H1 (cell line): ENCODE measurements at regions of chr19 and their contacts with region 1.

Region 1: DNA sequence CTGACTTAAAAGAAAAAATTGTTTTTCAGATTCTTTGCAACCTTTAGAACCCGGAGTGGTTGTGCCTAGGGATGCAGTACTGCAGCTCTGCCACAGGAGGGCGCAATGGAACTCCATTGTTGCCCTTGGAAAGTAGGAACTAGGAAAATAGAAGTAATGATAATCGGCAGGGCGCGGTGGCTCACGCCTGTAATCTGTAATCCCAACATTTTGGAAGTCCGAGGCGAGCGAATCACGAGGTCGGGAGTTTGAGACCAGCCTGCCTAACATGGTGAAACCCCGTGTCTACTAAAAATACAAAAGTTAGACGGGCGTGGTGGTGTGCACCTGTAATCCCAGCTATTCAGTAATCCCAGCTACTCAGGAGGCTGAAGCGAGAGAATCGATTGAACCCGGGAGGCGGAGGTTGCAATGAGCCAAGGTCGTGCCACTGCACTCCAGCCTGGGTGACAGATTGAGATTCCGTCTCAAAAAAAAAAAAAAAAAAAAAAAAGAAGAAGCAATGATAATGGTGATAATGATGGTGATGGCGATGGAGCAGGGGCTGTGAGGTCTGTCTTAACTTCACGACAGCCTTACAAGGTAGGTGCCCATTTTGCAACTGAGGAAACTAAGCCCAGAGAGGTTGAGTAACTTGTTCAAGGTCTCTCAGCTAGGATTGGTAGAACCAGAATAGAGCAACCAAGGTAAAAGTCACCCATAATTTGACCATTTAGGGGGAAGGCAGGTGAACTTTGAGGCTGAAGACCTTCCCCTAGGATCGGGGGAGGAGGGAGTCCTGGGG is 5.5 kb upstream of the ADAMTS10 start:
- DNase-seq: peak in 1 of 2 experiments; percentile 87
- H3K4me3 ChIP-seq: no peak overlapping the region
- H3K27ac ChIP-seq: no peak overlapping the region
- H3K4me1 ChIP-seq: peaks cover 2 to 8% (median 5%) of the 10 kb centered on the region in 4 experiments; a peak in 5 of 7 replicates
- H3K27me3 ChIP-seq: no peaks in the 10 kb centered on the region
- CTCF ChIP-seq: peak; percentile 86 to 93 (median 90)
- EP300 ChIP-seq: no peak
- POLR2A ChIP-seq: no peak
- RAD21 ChIP-seq: peak; percentile 69 to 79

Region 2: DNA sequence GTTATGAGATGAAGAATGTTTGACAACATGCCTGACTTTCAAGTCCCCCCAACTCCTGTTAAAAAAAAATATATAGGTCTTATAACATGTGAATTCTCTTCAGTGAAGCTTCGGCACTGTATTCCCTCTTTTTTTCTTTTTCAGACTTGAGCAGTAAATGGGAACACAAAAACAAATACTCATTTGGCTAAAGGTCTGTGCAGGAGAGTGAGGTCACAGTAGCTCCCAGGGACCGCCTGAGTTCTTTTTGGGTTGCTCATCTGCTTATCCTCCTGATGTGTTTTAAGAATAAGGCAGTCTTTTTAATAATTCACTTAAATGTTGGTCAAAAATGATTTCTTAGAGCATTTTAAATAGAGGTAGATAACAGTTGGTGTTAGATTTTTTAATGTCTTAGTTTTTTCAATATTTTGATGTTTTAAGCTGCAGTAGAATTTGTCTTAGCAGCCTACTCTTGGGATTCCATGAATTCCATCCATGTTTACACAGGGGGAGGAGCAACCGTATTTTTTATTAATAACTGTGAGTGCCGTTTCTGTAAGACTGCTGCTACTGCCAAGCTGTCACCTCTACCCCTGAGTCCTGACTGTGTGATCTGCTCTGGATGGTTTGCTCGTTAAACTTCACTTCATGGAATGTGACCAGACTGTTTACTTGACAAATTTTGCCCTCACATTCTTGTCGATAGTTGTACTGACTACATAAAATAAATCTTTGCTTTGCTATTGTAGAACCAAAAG is 156.3 kb before region 1 on chr19:
- CTCF ChIA-PET with region 1: no interaction called
- POLR2A ChIA-PET with region 1: no interaction called
- DNase-seq: no peak
- H3K4me3 ChIP-seq: no peak overlapping the region
- H3K27ac ChIP-seq: no peak overlapping the region
- H3K4me1 ChIP-seq: peaks cover 8 to 14% (median 12%) of the 10 kb centered on the region in 4 experiments
- H3K27me3 ChIP-seq: no peaks in the 10 kb centered on the region
- CTCF ChIP-seq: no peak
- EP300 ChIP-seq: no peak
- POLR2A ChIP-seq: no peak
- RAD21 ChIP-seq: no peak

Region 3: GRCh38 chr19:8592231-8593009 is 23.6 kb before region 1 on chr19:
- CTCF ChIA-PET with region 1: interaction called, 26 read pairs
- POLR2A ChIA-PET with region 1: interaction called, 11 read pairs
- DNase-seq: peak; percentile 100
- H3K4me3 ChIP-seq: peak overlapping the region; percentile 35 to 62 (median 58)
- H3K27ac ChIP-seq: no peak overlapping the region
- H3K4me1 ChIP-seq: peaks cover 0 to 5% (median under 1%) of the 10 kb centered on the region in 4 experiments; a peak in 4 of 7 replicates
- H3K27me3 ChIP-seq: peaks cover 0 to 3% (median 1%) of the 10 kb centered on the region in 4 experiments; a peak in 3 of 7 replicates
- CTCF ChIP-seq: no peak
- EP300 ChIP-seq: no peak
- POLR2A ChIP-seq: peak; percentile 32 to 64
- RAD21 ChIP-seq: no peak

Region 4: GRCh38 chr19:8601786-8602185 is 14.2 kb before region 1 on chr19:
- CTCF ChIA-PET with region 1: interaction called, 5 read pairs
- POLR2A ChIA-PET with region 1: interaction called, 15 read pairs
- DNase-seq: no peak
- H3K4me3 ChIP-seq: no peak overlapping the region
- H3K27ac ChIP-seq: no peak overlapping the region
- H3K4me1 ChIP-seq: no peaks in the 10 kb centered on the region
- H3K27me3 ChIP-seq: no peaks in the 10 kb centered on the region
- CTCF ChIP-seq: no peak
- EP300 ChIP-seq: no peak
- POLR2A ChIP-seq: no peak
- RAD21 ChIP-seq: no peak

Region 5: GRCh38 chr19:8631425-8631819 is 15.4 kb after region 1 on chr19:
- CTCF ChIA-PET with region 1: interaction called, 13 read pairs
- POLR2A ChIA-PET with region 1: interaction called, 5 read pairs
- DNase-seq: no peak
- H3K4me3 ChIP-seq: no peak overlapping the region; a peak in 1 of 8 replicates
- H3K27ac ChIP-seq: no peak overlapping the region
- H3K4me1 ChIP-seq: peaks cover 2 to 10% (median 8%) of the 10 kb centered on the region in 4 experiments; a peak in 6 of 7 replicates
- H3K27me3 ChIP-seq: no peaks in the 10 kb centered on the region
- CTCF ChIP-seq: no peak
- EP300 ChIP-seq: no peak
- POLR2A ChIP-seq: no peak
- RAD21 ChIP-seq: no peak

Region 6: DNA sequence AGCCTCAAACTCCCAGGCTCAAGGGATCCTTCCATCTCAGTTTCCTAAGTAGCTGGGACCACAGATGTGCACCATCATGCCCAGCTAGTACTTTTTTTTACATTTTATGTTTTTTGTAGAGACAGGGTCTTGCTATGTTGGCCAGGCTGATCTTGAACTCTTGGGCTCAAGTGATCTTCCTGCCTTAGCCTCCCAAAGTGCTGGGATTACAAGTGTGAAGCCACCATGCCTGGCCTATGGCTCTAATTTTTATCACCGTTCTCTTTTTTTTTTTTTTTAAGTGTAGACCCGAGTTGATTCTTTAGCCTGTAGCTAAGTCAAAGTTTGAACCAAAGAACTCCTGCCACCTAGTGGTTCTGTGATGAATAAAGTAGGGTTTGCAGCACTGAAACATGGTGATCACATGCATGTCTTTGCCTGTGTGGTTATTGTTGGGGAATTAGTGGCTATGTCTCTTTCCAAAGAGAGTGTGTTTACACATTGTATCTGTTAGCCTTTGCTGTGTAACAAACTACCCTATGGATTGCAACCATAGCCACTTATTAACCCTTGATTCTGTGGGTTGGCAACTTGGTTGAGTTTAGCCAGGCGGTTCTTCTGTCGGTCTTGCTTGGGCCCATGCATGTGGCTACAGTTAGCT is 26.0 kb after region 1 on chr19:
- CTCF ChIA-PET with region 1: interaction called, 23 read pairs
- POLR2A ChIA-PET with region 1: interaction called, 9 read pairs
- DNase-seq: no peak
- H3K4me3 ChIP-seq: no peak overlapping the region
- H3K27ac ChIP-seq: no peak overlapping the region
- H3K4me1 ChIP-seq: no peaks in the 10 kb centered on the region
- H3K27me3 ChIP-seq: peaks cover 0 to 13% (median 8%) of the 10 kb centered on the region in 4 experiments; a peak in 3 of 7 replicates
- CTCF ChIP-seq: peak in 2 of 3 experiments; percentile 59 to 65; a peak in 3 of 4 replicates
- EP300 ChIP-seq: no peak
- POLR2A ChIP-seq: no peak
- RAD21 ChIP-seq: peak; percentile 59 to 66

Region 7: GRCh38 chr19:8673276-8673891 is 57.4 kb after region 1 on chr19:
- CTCF ChIA-PET with region 1: no interaction called
- POLR2A ChIA-PET with region 1: no interaction called
- DNase-seq: no peak
- H3K4me3 ChIP-seq: no peak overlapping the region
- H3K27ac ChIP-seq: no peak overlapping the region
- H3K4me1 ChIP-seq: no peaks in the 10 kb centered on the region
- H3K27me3 ChIP-seq: no peaks in the 10 kb centered on the region
- CTCF ChIP-seq: no peak
- EP300 ChIP-seq: no peak
- POLR2A ChIP-seq: no peak
- RAD21 ChIP-seq: no peak

Region 8: GRCh38 chr19:8702350-8702749 is 86.3 kb after region 1 on chr19:
- CTCF ChIA-PET with region 1: no interaction called
- POLR2A ChIA-PET with region 1: no interaction called
- DNase-seq: no peak
- H3K4me3 ChIP-seq: no peak overlapping the region
- H3K27ac ChIP-seq: no peak overlapping the region
- H3K4me1 ChIP-seq: no peaks in the 10 kb centered on the region
- H3K27me3 ChIP-seq: no peaks in the 10 kb centered on the region; a peak in 1 of 7 replicates
- CTCF ChIP-seq: no peak
- EP300 ChIP-seq: no peak
- POLR2A ChIP-seq: no peak
- RAD21 ChIP-seq: no peak

Region 9: GRCh38 chr19:8721334-8721733 is 105.3 kb after region 1 on chr19 and contains the start of gene OR2Z1:
- CTCF ChIA-PET with region 1: no interaction called
- POLR2A ChIA-PET with region 1: no interaction called
- DNase-seq: no peak
- H3K4me3 ChIP-seq: no peak within 1 kb of the TSS
- H3K27ac ChIP-seq: no peak within 1 kb of the TSS
- H3K4me1 ChIP-seq: no peaks in the 10 kb centered on the region
- H3K27me3 ChIP-seq: no peaks in the 10 kb centered on the region
- CTCF ChIP-seq: no peak
- EP300 ChIP-seq: no peak
- POLR2A ChIP-seq: no peak
- RAD21 ChIP-seq: no peak
- total RNA-seq, gene OR2Z1: not detected in 2 replicates